Ascending aorta (tissue), 2 donors: ENCODE measurements at regions of chr4 and their contacts with region 1.

Region 1: DNA sequence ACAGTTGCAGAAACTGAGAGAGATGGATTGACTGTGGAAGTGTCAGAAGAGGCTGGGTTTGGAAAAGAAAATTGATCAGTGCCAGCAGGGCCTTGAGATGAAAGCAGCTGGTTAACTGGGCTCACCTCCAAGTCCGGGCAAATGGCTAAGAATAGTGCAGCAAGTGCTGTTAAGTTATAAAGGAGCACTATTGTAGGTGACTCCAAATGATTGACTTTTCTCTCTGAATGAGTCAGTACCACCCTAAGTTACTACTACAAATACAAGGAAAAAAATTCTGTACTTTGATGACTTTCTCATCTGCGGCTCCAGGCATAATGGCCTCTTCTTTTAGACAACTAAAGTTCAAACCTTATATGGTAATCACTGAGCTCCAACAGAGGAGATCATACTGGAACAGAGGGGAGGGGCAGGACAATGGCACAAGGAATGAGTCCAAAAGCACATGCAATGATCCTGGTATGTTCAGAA is 733.4 kb upstream of the INTU start:
- DNase-seq: peak in 1 of 2 donors; percentile 76
- H3K4me3 ChIP-seq: no peak overlapping the region
- H3K27ac ChIP-seq: peak overlapping the region; percentile 58 to 90
- H3K4me1 ChIP-seq: peaks cover 0 to 8% of the 10 kb centered on the region in 2 donors
- H3K27me3 ChIP-seq: no peaks in the 10 kb centered on the region
- CTCF ChIP-seq: no peak

Region 2: DNA sequence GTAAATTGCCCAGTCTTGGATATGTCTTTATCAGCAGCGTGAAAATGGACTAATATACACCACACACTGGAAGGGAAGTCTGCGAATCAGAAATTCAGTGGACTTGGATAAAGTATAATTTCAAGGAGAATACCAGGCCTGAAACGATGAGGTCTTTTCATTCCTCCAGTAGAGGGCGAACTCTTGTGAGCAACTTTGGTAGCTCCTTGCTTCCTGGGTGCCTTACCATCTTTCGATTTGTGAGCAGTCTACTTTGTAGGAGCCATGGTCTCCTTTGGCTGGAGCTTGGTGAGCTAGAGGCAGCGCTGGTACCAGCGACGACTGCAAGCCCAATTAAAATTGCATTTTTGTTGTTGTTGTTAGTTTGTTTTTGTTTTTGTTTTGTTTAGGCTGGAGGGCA is 792.7 kb before region 1 on chr4:
- intact Hi-C with region 1: no loop called
- DNase-seq: no peak
- H3K4me3 ChIP-seq: no peak overlapping the region
- H3K27ac ChIP-seq: no peak overlapping the region
- H3K4me1 ChIP-seq: no peaks in the 10 kb centered on the region
- H3K27me3 ChIP-seq: no peaks in the 10 kb centered on the region
- CTCF ChIP-seq: no peak

Region 3: GRCh38 chr4:126306152-126306869 is 593.1 kb before region 1 on chr4:
- intact Hi-C with region 1: loop called (anchors 10 kb)
- DNase-seq: peak; percentile 8 to 73
- H3K4me3 ChIP-seq: no peak overlapping the region
- H3K27ac ChIP-seq: peak overlapping the region; percentile 61 to 75
- H3K4me1 ChIP-seq: no peaks in the 10 kb centered on the region
- H3K27me3 ChIP-seq: no peaks in the 10 kb centered on the region
- CTCF ChIP-seq: no peak

Region 4: GRCh38 chr4:126838941-126839679 is 60.3 kb before region 1 on chr4:
- intact Hi-C with region 1: loop called (anchors 5 kb)
- DNase-seq: no peak
- H3K4me3 ChIP-seq: no peak overlapping the region
- H3K27ac ChIP-seq: peak overlapping the region in 1 of 2 donors; percentile 37
- H3K4me1 ChIP-seq: no peaks in the 10 kb centered on the region
- H3K27me3 ChIP-seq: no peaks in the 10 kb centered on the region
- CTCF ChIP-seq: no peak

Region 5: DNA sequence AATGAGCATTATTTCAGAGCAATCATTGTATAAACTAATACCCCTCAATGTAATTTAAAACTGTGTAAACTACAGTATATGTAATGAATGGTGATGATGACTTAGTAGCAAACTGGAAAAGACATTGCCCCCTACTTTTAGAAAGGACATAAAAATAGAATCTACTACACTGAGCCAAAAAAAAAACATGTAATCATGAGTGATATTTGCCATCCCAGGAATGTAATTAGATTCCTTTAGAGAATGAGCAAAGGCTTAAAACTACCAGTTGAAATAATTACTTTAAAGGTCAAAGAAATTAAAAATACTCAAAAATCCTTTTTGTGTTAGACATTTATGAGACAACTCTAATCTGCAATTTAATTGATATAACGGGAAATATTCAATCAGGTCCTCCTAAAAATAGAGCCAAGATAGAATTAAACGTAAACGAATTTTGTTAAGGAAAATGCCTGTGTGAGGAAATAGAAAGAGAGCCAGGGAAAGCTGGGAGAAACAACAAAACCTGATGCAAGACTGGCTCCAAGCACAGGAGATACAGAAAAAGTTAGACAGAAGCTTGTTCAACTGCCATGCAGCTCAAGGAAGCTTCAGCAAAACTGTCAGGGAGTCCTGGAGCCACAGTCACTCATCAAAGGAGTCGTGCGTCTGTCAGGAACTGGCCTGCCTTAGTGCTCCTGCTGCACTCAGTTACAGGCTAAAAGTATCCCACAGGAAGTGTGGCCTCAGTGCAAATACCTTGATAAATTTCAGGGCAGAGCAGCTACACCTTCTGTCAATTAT is 77.7 kb after region 1 on chr4:
- intact Hi-C with region 1: no loop called
- DNase-seq: no peak
- H3K4me3 ChIP-seq: no peak overlapping the region
- H3K27ac ChIP-seq: peak overlapping the region in 1 of 2 donors; percentile 36
- H3K4me1 ChIP-seq: no peaks in the 10 kb centered on the region
- H3K27me3 ChIP-seq: no peaks in the 10 kb centered on the region
- CTCF ChIP-seq: no peak